Dorsolateral prefrontal cortex (tissue), 120 donors: ENCODE measurements at regions of chrX and their contacts with region 1.

Region 1: DNA sequence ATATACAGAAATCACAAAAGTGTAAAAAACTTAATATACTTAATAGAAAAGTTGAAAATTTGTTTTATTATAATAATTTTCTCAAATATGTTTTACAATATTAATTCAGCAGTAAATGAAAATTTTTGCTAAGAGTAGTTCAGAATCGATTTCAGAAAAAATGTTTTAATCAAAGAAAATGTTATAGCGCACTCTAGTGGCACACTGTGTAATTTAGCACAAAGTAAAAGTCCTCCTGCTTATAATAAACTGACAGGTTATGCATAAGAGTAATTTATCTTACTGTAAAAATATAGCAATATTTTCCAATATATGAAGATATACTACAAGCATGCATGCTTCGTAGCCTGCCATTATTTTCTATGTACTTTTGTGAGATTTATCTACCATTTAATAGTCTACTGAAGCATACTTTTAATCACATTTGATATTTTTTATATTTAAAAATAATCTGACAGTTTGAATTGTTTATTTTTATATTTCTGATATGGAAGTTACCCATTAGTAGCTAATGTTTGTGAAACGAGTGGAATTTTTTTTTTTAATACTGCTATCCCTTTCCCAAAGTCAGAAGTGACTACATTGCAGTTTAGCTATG is 217.9 kb upstream of the KLHL4 start:
- DNase-seq: no peak
- H3K4me3 ChIP-seq: no peak overlapping the region
- H3K27ac ChIP-seq: no peak overlapping the region
- H3K27me3 ChIP-seq: peaks cover 0 to 30% (median 2%) of the 10 kb centered on the region in 45 donors
- CTCF ChIP-seq: peak; percentile 38 to 85 (median 69)

Region 2: GRCh38 chrX:87160435-87161010 is 139.1 kb before region 1 on chrX:
- intact Hi-C with region 1: loop called in 1 of 2 experiments (anchors 2 kb)
- DNase-seq: no peak
- H3K4me3 ChIP-seq: no peak overlapping the region
- H3K27ac ChIP-seq: no peak overlapping the region
- H3K27me3 ChIP-seq: peaks cover 0 to 57% (median 7%) of the 10 kb centered on the region in 45 donors
- CTCF ChIP-seq: peak in 33 of 56 donors; percentile 4 to 58 (median 29)

Region 3: GRCh38 chrX:87392363-87392762 is 92.7 kb after region 1 on chrX:
- intact Hi-C with region 1: no loop called
- DNase-seq: no peak
- H3K4me3 ChIP-seq: no peak overlapping the region
- H3K27ac ChIP-seq: no peak overlapping the region
- H3K27me3 ChIP-seq: peaks cover 0 to 58% (median 7%) of the 10 kb centered on the region in 45 donors
- CTCF ChIP-seq: no peak

Region 4: DNA sequence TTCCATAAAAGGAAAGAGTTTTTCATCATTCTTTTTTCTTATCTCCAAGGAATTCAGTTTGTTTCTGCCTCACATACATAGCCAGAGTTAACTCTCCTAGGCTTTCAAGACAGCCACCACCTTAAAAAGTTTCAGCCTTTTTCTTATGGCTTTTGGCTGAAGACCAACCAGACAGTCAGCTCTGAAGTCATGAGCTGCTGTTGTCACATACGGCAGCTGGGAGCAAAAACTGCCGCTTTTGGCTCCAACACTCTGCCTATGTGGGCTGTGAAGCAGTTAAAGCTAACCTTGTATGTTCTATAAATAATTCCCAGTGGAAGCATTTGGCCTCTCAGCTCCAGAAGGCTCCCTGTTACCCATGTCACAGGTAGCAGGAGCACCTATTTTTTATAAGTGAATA is 322.0 kb after region 1 on chrX:
- intact Hi-C with region 1: no loop called
- DNase-seq: peak in 2 of 10 donors; percentile 4 to 18
- H3K4me3 ChIP-seq: no peak overlapping the region
- H3K27ac ChIP-seq: peak overlapping the region in 42 of 59 donors; percentile 4 to 79 (median 52)
- H3K27me3 ChIP-seq: peaks cover 0 to 65% (median 12%) of the 10 kb centered on the region in 45 donors
- CTCF ChIP-seq: no peak